MCF 10A (cell line): ENCODE measurements at regions of chr17 and their contacts with region 1.

Region 1: DNA sequence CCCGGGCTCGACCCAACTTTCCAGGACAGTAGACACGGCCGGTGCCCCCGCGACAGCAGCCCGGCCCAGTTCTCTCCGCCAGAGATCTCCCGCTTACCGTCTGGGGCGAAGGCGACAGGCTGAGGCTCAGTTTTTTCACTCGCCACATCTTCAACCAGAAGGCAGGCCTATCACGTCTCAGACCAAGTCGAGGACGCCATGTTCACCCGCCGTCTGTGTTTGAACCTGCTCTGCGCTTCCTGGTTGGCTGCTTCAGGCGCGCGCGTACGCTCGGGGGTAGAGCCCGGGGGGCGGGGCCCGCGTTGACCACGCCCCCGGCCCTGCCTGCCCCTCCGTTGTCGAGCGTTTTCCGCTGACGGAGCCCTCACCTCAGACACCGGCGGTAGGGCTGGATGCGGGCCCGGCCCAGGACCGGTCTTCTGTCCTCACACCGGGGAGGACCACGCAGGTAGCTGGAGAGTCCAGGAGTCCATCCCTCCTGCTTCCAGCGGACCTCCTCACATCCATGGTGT is at the start of gene SPAG5:
- DNase-seq: peak; percentile 92
- H3K4me3 Mint-ChIP-seq: peak within 1 kb of the TSS; percentile 87
- H3K27ac Mint-ChIP-seq: peak within 1 kb of the TSS; percentile 90
- H3K4me1 Mint-ChIP-seq: peaks cover 21% of the 10 kb centered on the region
- H3K27me3 Mint-ChIP-seq: no peaks in the 10 kb centered on the region
- CTCF ChIP-seq: no peak
- total RNA-seq, gene SPAG5: 31.5 and 38.1 TPM in 2 replicates

Region 2: DNA sequence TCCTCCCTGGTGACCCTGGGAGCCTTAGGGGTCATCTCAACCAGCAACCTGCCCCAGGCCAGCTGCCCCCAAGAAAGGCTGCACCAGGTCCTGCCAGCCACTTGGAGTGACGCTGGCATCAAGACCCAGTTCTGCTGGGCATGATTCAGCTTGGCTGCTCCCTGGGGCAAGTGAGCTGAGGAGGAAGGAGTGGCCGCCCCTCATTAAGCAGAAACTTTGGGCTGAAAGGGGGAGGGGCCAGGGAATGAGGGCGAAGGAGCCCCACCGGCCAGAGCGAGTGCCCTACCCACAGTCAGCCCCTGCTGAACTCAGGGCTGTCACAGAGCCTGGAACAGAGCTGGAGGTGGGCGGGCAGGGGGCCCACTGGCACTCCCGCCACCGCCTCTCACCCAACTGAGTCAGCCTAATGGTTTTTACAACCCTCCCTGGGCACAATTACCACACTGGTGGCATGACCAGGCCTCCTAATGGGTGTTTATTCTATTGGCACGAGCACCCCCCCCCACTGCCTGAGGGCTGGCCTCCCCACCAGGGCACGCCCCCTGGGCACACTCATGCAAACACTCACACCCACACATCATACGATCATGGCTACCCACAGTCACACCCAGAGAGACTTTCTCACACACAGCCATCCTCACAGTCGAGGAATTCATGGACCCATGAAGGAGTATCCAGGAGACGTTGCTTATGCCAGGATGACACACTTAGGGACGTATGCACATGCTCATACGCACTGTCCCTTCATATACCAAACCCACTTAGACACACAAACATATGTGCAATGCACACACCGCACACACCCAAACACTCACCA is 65.7 kb before region 1 on chr17:
- CTCF ChIA-PET with region 1: no interaction called
- POLR2A ChIA-PET with region 1: no interaction called
- intact Hi-C with region 1: no loop called
- DNase-seq: peak; percentile 38
- H3K4me3 Mint-ChIP-seq: no peak overlapping the region
- H3K27ac Mint-ChIP-seq: no peak overlapping the region
- H3K4me1 Mint-ChIP-seq: peaks cover 19% of the 10 kb centered on the region
- H3K27me3 Mint-ChIP-seq: peaks cover 12% of the 10 kb centered on the region
- CTCF ChIP-seq: no peak

Region 3: DNA sequence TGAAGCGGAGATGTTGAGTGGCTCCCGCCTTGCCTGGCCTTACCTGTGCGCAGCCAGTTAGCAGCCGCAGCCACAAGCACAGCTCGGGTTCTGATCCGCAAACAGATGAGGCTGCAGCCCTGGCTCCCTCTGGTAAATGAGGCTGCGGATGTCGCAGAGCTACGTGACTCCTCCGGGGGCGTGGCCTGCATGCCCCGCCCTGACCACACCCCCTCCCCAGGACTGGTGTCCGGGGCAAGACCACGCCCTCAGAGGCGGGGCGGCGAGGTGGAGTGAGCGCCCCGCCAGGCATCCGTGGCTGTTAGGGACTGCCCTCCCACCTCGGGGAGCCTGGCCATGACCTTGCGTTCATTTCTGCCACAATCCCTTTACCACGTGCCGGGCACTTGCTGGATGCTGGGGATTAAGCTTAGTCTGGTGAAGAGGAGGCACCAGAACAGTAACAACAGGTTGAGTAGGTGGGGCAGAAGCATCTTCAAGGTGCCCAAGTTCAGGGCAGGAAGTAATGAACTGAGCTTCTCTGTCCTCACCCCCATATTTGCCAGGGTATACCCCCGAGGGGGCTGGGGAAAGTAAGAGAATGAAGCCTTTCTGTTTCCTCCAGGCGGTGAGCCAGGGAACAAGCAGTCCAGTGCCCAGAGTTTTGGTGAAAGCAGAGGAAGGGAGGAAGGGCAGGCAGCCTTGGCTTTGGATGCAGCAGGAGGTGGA is 21.9 kb before region 1 on chr17 and contains the start of gene ALDOC:
- CTCF ChIA-PET with region 1: no interaction called
- POLR2A ChIA-PET with region 1: interaction called, 32 read pairs
- intact Hi-C with region 1: no loop called
- DNase-seq: peak; percentile 94
- H3K4me3 Mint-ChIP-seq: peak within 1 kb of the TSS; percentile 64
- H3K27ac Mint-ChIP-seq: peak within 1 kb of the TSS; percentile 54
- H3K4me1 Mint-ChIP-seq: peaks cover 17% of the 10 kb centered on the region
- H3K27me3 Mint-ChIP-seq: no peaks in the 10 kb centered on the region
- CTCF ChIP-seq: no peak
- total RNA-seq, gene ALDOC: 2.4 and 6.0 TPM in 2 replicates

Region 4: GRCh38 chr17:28612936-28613872 is 14.3 kb after region 1 on chr17:
- CTCF ChIA-PET with region 1: interaction called, 10 read pairs
- POLR2A ChIA-PET with region 1: interaction called, 16 read pairs
- intact Hi-C with region 1: no loop called
- DNase-seq: peak; percentile 42
- H3K4me3 Mint-ChIP-seq: no peak overlapping the region
- H3K27ac Mint-ChIP-seq: no peak overlapping the region
- H3K4me1 Mint-ChIP-seq: no peaks in the 10 kb centered on the region
- H3K27me3 Mint-ChIP-seq: no peaks in the 10 kb centered on the region
- CTCF ChIP-seq: peak; percentile 45